ENCODE measurements at regions of chr12 and their contacts with region 1.

Region 1: GRCh38 chr12:68587448-68587873 is 23.2 kb upstream of the RAP1B start:
- DNase-seq: peak in 7 of 14 experiments; percentile 8 to 71 (median 49)
- ATAC-seq: peak; percentile 65
- H3K4me3 ChIP-seq: no peak overlapping the region
- H3K4me3 Mint-ChIP-seq: peak overlapping the region; percentile 77
- H3K27ac ChIP-seq: no peak overlapping the region
- H3K27ac Mint-ChIP-seq: peak overlapping the region; percentile 81
- H3K4me1 ChIP-seq: peaks cover 34% of the 10 kb centered on the region
- H3K4me1 Mint-ChIP-seq: peaks cover 63% of the 10 kb centered on the region
- H3K27me3 ChIP-seq: no peaks in the 10 kb centered on the region
- H3K27me3 Mint-ChIP-seq: no peaks in the 10 kb centered on the region
- CTCF ChIP-seq: no peak

Region 2: DNA sequence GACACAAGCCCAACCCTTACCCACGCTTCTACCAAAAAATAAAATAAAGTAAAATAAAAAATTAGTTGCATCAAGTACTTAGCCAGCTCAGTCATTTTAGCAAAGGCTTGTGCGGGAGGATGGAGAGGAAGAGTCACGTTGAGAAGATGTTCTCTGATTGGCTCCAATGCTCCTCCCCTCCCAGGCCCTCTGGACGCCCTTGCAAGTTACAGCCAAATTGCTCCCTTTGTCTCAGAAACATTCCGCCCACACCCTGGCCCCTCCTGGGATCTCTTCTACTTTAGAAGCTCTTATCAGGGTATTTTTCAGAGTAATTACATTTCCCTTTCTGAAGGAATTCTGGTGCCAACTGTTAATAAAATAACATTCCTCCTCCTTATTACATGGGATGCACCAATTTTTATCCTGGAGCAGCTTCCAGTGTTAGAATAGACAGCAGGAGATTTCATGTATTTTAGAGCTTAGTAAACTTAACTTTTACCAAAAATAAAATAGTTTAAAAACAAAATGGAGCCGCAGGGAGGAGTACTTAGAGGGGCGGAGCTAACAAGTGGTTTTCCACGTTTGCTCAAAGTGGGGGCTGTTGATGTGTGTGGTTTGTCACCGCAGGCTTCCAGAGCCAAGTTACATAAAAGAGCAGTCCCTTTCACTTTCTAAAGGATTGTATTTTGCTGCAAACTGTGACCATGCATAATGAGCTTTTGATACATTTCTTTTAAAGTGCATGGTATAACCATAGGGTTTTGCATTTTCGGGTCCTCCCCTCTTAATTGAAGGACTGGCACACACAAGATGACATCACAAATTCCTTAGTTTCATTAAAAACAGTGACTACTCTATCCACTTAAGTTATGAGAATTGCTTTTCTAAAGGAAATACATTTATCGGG is 48.5 kb before region 1 on chr12:
- CTCF ChIA-PET with region 1: no interaction called
- POLR2A ChIA-PET with region 1: interaction called, 23 read pairs
- intact Hi-C with region 1: loop called (anchors 5 kb)
- DNase-seq: peak; percentile 20 to 91 (median 42)
- ATAC-seq: peak; percentile 94
- H3K4me3 ChIP-seq: peak overlapping the region; percentile 5
- H3K4me3 Mint-ChIP-seq: peak overlapping the region; percentile 49
- H3K27ac ChIP-seq: no peak overlapping the region
- H3K27ac Mint-ChIP-seq: peak overlapping the region; percentile 80
- H3K4me1 ChIP-seq: peaks cover 16% of the 10 kb centered on the region
- H3K4me1 Mint-ChIP-seq: peaks cover 65% of the 10 kb centered on the region
- H3K27me3 ChIP-seq: no peaks in the 10 kb centered on the region
- H3K27me3 Mint-ChIP-seq: no peaks in the 10 kb centered on the region
- CTCF ChIP-seq: no peak

Region 3: GRCh38 chr12:68628698-68629097 is 41.2 kb after region 1 on chr12:
- CTCF ChIA-PET with region 1: no interaction called
- POLR2A ChIA-PET with region 1: no interaction called
- intact Hi-C with region 1: loop called in 1 of 2 experiments (anchors 5 kb)
- DNase-seq: no peak
- ATAC-seq: peak; percentile 29
- H3K4me3 ChIP-seq: no peak overlapping the region
- H3K4me3 Mint-ChIP-seq: peak overlapping the region; percentile 71
- H3K27ac ChIP-seq: no peak overlapping the region
- H3K27ac Mint-ChIP-seq: peak overlapping the region; percentile 57
- H3K4me1 ChIP-seq: peaks cover 49% of the 10 kb centered on the region
- H3K4me1 Mint-ChIP-seq: peaks cover 87% of the 10 kb centered on the region
- H3K27me3 ChIP-seq: no peaks in the 10 kb centered on the region
- H3K27me3 Mint-ChIP-seq: no peaks in the 10 kb centered on the region
- CTCF ChIP-seq: no peak